GM12878 (cell line): ENCODE measurements at regions of chr12 and their contacts with region 1.

Region 1: GRCh38 chr12:89470741-89471509 is 53.7 kb downstream of the GALNT4 start:
- DNase-seq: no peak
- ATAC-seq: peak; percentile 73
- H3K4me3 ChIP-seq: no peak overlapping the region
- H3K27ac ChIP-seq: no peak overlapping the region
- H3K4me1 ChIP-seq: peaks cover 30% of the 10 kb centered on the region
- H3K27me3 ChIP-seq: no peaks in the 10 kb centered on the region
- CTCF ChIP-seq: peak; percentile 65 to 67 (median 65)
- EP300 ChIP-seq: no peak
- POLR2A ChIP-seq: no peak
- RAD21 ChIP-seq: peak; percentile 78

Region 2: GRCh38 chr12:89019408-89020120 is 451.4 kb before region 1 on chr12:
- CTCF ChIA-PET with region 1: interaction called, 10 read pairs
- POLR2A ChIA-PET with region 1: no interaction called
- RAD21 ChIA-PET with region 1: interaction called, 8 read pairs
- SMC1A ChIA-PET with region 1: interaction called, 5 read pairs
- in situ Hi-C with region 1: no loop called
- intact Hi-C with region 1: no loop called
- DNase-seq: peak; percentile 32
- ATAC-seq: peak; percentile 99
- H3K4me3 ChIP-seq: no peak overlapping the region
- H3K27ac ChIP-seq: no peak overlapping the region
- H3K4me1 ChIP-seq: no peaks in the 10 kb centered on the region
- H3K27me3 ChIP-seq: no peaks in the 10 kb centered on the region
- CTCF ChIP-seq: peak; percentile 76 to 91 (median 77); a peak in 5 of 6 replicates
- EP300 ChIP-seq: no peak
- POLR2A ChIP-seq: no peak
- RAD21 ChIP-seq: peak; percentile 91

Region 3: GRCh38 chr12:89352492-89353187 is 118.3 kb before region 1 on chr12 and contains the start of gene DUSP6:
- CTCF ChIA-PET with region 1: no interaction called
- POLR2A ChIA-PET with region 1: no interaction called
- RAD21 ChIA-PET with region 1: no interaction called
- SMC1A ChIA-PET with region 1: interaction called, 4 read pairs
- in situ Hi-C with region 1: no loop called
- intact Hi-C with region 1: loop called (anchors 5 kb)
- DNase-seq: no peak
- ATAC-seq: peak; percentile 19; the same call in 2 of the 3 replicates
- H3K4me3 ChIP-seq: peak within 1 kb of the TSS; percentile 65; the same call in 1 of the 2 replicates
- H3K27ac ChIP-seq: no peak within 1 kb of the TSS
- H3K4me1 ChIP-seq: no peaks in the 10 kb centered on the region; the same call in 1 of the 2 replicates
- H3K27me3 ChIP-seq: peaks cover 21 to 49% of the 10 kb centered on the region in 2 experiments
- CTCF ChIP-seq: no peak
- EP300 ChIP-seq: no peak
- POLR2A ChIP-seq: no peak
- RAD21 ChIP-seq: no peak
- polyA plus RNA-seq, gene DUSP6: 0.02 TPM in 1 of 2 experiments, not detected in the other

Region 4: GRCh38 chr12:89514751-89515150 is 43.8 kb after region 1 on chr12:
- CTCF ChIA-PET with region 1: interaction called, 14 read pairs
- POLR2A ChIA-PET with region 1: interaction called, 3 read pairs
- RAD21 ChIA-PET with region 1: interaction called, 3 read pairs
- SMC1A ChIA-PET with region 1: interaction called, 5 read pairs
- in situ Hi-C with region 1: no loop called
- intact Hi-C with region 1: no loop called
- DNase-seq: no peak
- ATAC-seq: peak; percentile 85
- H3K4me3 ChIP-seq: no peak overlapping the region
- H3K27ac ChIP-seq: no peak overlapping the region
- H3K4me1 ChIP-seq: peaks cover 5% of the 10 kb centered on the region; the same call in 1 of the 2 replicates
- H3K27me3 ChIP-seq: no peaks in the 10 kb centered on the region
- CTCF ChIP-seq: no peak
- EP300 ChIP-seq: no peak
- POLR2A ChIP-seq: no peak
- RAD21 ChIP-seq: no peak

Region 5: DNA sequence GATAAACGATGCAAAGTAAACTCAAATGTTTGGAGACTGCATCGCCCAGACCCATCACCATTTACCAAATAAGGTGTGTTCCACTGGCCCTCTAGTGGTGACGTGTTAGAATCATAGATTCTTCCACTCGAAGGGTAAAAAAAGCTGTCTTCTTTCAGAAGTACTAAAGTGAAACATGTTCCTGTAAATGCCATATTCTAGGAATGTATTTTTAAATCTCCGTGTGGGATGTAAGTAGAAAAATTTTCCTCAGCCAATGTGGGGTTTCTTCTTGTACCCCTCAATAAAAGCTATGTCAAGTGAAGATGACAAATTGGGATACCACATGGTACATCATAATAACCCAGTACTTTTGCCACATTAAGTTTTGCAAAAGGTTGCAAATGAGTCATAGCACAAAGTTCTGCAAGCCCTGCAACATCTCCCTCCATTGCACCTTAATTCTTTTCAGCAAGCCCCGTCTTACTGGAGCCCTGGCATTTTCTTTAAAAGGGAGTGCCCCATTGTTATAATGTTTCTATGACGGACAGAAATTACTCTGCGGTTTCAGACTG is 1383.3 kb after region 1 on chr12:
- CTCF ChIA-PET with region 1: no interaction called
- POLR2A ChIA-PET with region 1: no interaction called
- RAD21 ChIA-PET with region 1: no interaction called
- SMC1A ChIA-PET with region 1: no interaction called
- in situ Hi-C with region 1: no loop called
- intact Hi-C with region 1: loop called (anchors 10 kb)
- DNase-seq: no peak
- ATAC-seq: peak; percentile 82
- H3K4me3 ChIP-seq: no peak overlapping the region
- H3K27ac ChIP-seq: no peak overlapping the region
- H3K4me1 ChIP-seq: no peaks in the 10 kb centered on the region
- H3K27me3 ChIP-seq: no peaks in the 10 kb centered on the region
- CTCF ChIP-seq: peak; percentile 62 to 76 (median 68)
- EP300 ChIP-seq: no peak
- POLR2A ChIP-seq: no peak
- RAD21 ChIP-seq: peak; percentile 66